Ovary (tissue), 10 donors: ENCODE measurements at regions of chr10 and their contacts with region 1.

Region 1: DNA sequence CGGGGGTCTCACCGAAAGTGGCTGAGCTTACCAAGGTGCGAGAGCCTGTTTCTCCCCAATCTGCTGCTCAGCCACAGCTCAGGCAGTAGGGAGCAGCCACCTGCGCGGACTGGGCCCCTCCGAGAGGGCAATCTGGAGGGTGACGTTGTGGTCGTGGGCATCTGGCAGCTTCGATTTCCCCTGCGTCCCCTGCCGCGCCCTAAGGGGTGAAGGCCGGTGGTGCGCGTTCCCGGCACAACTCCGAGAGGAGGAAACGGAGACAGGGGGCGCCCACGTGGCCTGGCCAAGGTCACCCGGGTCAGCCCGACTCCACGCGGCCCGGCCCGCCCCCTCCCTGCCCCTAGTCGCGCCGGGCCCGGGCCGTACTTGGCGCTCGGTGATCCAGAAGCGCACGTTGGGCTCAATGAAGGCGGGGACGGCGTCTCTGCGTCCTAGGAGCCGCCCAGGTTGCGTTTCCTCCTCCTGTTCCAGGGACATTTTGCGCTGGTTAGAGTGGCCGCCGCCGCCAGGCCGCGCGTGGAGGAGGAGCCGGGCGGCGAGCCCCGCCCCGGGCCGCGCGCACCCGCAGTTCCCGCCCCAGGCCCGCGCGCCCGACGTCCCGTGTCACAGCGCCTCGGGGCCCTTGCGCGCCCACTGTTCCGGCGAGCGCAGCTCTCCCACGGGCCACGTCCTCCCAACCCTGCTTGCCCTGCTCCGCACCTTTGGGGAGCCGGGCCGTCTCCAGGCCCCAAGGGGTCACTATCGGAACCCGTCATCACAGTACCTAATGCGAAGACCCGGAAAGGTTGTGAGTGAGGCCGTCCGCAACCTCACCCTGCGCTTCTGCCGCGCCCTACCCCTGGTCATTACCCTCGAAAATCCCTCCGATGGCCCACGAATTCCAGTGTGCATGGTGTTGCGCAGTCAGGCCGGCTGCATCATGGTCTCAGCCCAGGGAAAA is at the start of gene SFXN4:
- DNase-seq: peak; percentile 76 to 86 (median 79)
- H3K4me3 ChIP-seq: peak within 1 kb of the TSS; percentile 71
- H3K27ac ChIP-seq: peak within 1 kb of the TSS; percentile 78 to 92
- H3K4me1 ChIP-seq: peaks cover 2% of the 10 kb centered on the region
- H3K27me3 ChIP-seq: no peaks in the 10 kb centered on the region
- CTCF ChIP-seq: peak in 1 of 3 donors; percentile 15
- EP300 ChIP-seq: no peak
- POLR2A ChIP-seq: peak; percentile 76
- total RNA-seq, gene SFXN4: 11.8 to 54.9 (median 18.5) TPM

Region 2: GRCh38 chr10:118922226-118922625 is 243.2 kb before region 1 on chr10:
- intact Hi-C with region 1: no loop called
- DNase-seq: no peak
- H3K4me3 ChIP-seq: no peak overlapping the region
- H3K27ac ChIP-seq: no peak overlapping the region
- H3K4me1 ChIP-seq: no peaks in the 10 kb centered on the region
- H3K27me3 ChIP-seq: no peaks in the 10 kb centered on the region
- CTCF ChIP-seq: no peak
- EP300 ChIP-seq: no peak
- POLR2A ChIP-seq: no peak

Region 3: GRCh38 chr10:119028900-119029612 is 136.4 kb before region 1 on chr10:
- intact Hi-C with region 1: no loop called
- DNase-seq: peak; percentile 78 to 90 (median 87)
- H3K4me3 ChIP-seq: peak overlapping the region; percentile 52
- H3K27ac ChIP-seq: no peak overlapping the region
- H3K4me1 ChIP-seq: peaks cover 4% of the 10 kb centered on the region
- H3K27me3 ChIP-seq: no peaks in the 10 kb centered on the region
- CTCF ChIP-seq: peak in 2 of 3 donors; percentile 9 to 10
- EP300 ChIP-seq: no peak
- POLR2A ChIP-seq: no peak

Region 4: GRCh38 chr10:119103903-119104652 is 61.4 kb before region 1 on chr10 and contains the start of gene DENND10:
- intact Hi-C with region 1: loop called in 1 of 4 experiments (anchors 10 kb)
- DNase-seq: peak; percentile 82 to 91 (median 86)
- H3K4me3 ChIP-seq: peak within 1 kb of the TSS; percentile 62
- H3K27ac ChIP-seq: peak within 1 kb of the TSS in 1 of 2 donors; percentile 45
- H3K4me1 ChIP-seq: peaks cover 7% of the 10 kb centered on the region
- H3K27me3 ChIP-seq: no peaks in the 10 kb centered on the region
- CTCF ChIP-seq: peak in 1 of 3 donors; percentile 29
- EP300 ChIP-seq: no peak
- POLR2A ChIP-seq: peak; percentile 73
- total RNA-seq, gene DENND10: 32.3 to 53.8 (median 41.3) TPM